ENCODE measurements at regions of chr10 and their contacts with region 1.

Region 1: GRCh38 chr10:98920807-98921206 is 314.8 kb downstream of the HPSE2 start:
- DNase-seq: no peak
- ATAC-seq: no peak
- H3K4me3 Mint-ChIP-seq: no peak overlapping the region
- H3K27ac Mint-ChIP-seq: no peak overlapping the region
- H3K4me1 Mint-ChIP-seq: no peaks in the 10 kb centered on the region
- H3K27me3 Mint-ChIP-seq: no peaks in the 10 kb centered on the region

Region 2: GRCh38 chr10:98956576-98957260 is 35.9 kb after region 1 on chr10:
- CTCF ChIA-PET with region 1: no interaction called
- POLR2A ChIA-PET with region 1: no interaction called
- intact Hi-C with region 1: loop called in 1 of 2 experiments (anchors 5 kb)
- DNase-seq: no peak
- ATAC-seq: no peak
- H3K4me3 Mint-ChIP-seq: no peak overlapping the region
- H3K27ac Mint-ChIP-seq: no peak overlapping the region
- H3K4me1 Mint-ChIP-seq: no peaks in the 10 kb centered on the region
- H3K27me3 Mint-ChIP-seq: no peaks in the 10 kb centered on the region